Right ventricle myocardium superior (tissue), 1 donor: ENCODE measurements at regions of chr4 and their contacts with region 1.

Region 1: DNA sequence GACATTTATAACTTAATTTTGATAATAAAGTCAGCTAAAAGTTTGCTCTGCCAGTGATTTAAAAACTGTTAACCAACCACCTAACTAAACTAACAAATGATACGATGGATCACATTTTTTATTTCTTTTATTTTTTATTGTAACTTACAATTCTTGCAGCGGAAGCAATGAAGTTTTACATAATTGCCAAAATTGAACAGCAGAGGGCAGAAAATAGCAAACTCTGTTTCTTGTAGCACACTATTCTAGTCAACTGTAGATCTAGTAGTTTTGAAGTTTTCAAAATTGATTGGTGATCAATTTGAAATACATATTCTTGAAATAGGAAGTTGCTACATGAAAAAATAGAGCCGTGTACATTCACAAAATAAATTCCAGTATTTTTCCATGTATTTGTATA is 2.8 kb upstream of the GRIA2 start:
- DNase-seq: no peak
- ATAC-seq: no peak

Region 2: DNA sequence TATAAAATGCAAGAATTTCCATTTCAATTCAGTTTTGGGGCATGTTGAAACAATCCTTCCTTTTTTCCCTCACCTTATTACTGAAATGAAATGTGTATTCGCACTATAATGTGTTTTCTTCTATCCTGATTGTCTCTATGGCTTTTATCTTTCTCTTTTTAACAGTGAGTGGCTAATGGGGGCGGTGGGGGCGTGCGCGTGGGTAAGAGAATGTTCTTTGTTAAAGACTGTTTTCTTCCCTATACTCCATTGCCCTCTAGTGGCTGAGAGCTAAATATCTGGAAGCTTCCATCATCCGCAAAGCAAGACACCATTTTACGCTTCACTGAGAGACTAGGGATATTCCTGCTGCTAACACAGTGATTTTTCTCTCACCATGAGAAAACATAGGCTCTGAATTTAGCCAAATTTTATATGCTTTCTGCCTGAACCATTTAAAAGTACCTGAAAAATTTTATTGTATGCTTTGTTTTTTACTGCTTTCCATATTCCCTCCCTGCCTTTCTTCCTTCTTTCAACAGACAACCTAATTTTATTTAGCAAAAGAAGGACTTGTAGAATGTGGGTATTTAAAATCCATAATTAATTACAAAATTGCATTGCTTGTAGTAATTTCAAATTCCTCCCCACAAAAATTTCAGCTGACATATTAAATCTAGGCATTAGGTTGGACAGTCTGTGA is 761.1 kb after region 1 on chr4:
- intact Hi-C with region 1: loop called (anchors 10 kb)
- DNase-seq: peak; percentile 62
- ATAC-seq: peak; percentile 91